ENCODE measurements at regions of chr19 and their contacts with region 1.

Region 1: GRCh38 chr19:53467485-53468262 is at the start of gene ZNF813:
- DNase-seq: peak; percentile 95
- ATAC-seq: peak; percentile 98
- H3K4me3 ChIP-seq: peak within 1 kb of the TSS; percentile 63 to 79 (median 73)
- H3K4me3 Mint-ChIP-seq: peak within 1 kb of the TSS; percentile 97
- H3K27ac ChIP-seq: peak within 1 kb of the TSS; percentile 35 to 80
- H3K27ac Mint-ChIP-seq: peak within 1 kb of the TSS; percentile 91
- H3K4me1 ChIP-seq: peaks cover 6 to 15% of the 10 kb centered on the region in 2 donors
- H3K4me1 Mint-ChIP-seq: peaks cover 32% of the 10 kb centered on the region
- H3K27me3 ChIP-seq: peaks cover 0 to 25% (median 5%) of the 10 kb centered on the region in 4 experiments
- H3K27me3 Mint-ChIP-seq: peaks cover 18% of the 10 kb centered on the region
- CTCF ChIP-seq: no peak
- total RNA-seq, gene ZNF813: 7.8 and 10.8 TPM in 2 replicates

Region 2: DNA sequence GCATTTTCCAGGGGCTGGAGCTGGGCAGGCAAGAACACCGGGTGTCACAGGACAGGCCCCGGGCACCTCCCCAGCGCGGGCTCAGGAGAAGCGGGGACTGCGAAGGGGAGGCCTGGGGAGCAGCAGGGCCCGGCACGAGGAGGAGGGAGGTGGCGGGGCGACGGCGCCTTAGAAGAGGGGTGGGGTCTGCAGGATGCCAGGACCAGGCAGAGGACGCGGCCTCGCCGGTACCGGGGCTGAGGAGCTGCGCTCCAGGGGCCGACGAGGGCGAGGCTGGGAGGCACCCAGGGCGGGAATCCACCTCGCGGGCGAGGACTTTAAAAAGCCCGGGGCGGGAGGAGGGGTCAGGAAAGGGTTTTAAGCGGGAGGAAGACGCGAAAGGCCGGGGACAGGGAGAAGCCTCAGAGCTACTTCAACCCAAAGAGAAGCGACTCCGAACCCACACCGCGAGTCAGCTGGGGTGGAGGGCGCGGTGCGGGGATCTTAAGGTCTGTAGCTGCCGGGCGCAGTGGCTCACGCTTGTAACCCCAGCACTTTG is 309.5 kb before region 1 on chr19:
- CTCF ChIA-PET with region 1: no interaction called
- POLR2A ChIA-PET with region 1: no interaction called
- intact Hi-C with region 1: loop called (anchors 1 kb)
- DNase-seq: peak; percentile 53
- ATAC-seq: peak; percentile 18
- H3K4me3 ChIP-seq: peak overlapping the region; percentile 34 to 72 (median 66)
- H3K4me3 Mint-ChIP-seq: peak overlapping the region; percentile 92
- H3K27ac ChIP-seq: peak overlapping the region; percentile 38 to 50
- H3K27ac Mint-ChIP-seq: peak overlapping the region; percentile 54
- H3K4me1 ChIP-seq: peaks cover 13 to 17% of the 10 kb centered on the region in 2 donors
- H3K4me1 Mint-ChIP-seq: peaks cover 26% of the 10 kb centered on the region
- H3K27me3 ChIP-seq: no peaks in the 10 kb centered on the region
- H3K27me3 Mint-ChIP-seq: no peaks in the 10 kb centered on the region
- CTCF ChIP-seq: no peak

Region 3: GRCh38 chr19:53394974-53395839 is 72.5 kb before region 1 on chr19 and contains the start of gene ZNF765:
- CTCF ChIA-PET with region 1: no interaction called
- POLR2A ChIA-PET with region 1: no interaction called
- intact Hi-C with region 1: loop called (anchors 1 kb)
- DNase-seq: peak; percentile 96
- ATAC-seq: peak; percentile 100
- H3K4me3 ChIP-seq: peak within 1 kb of the TSS; percentile 65 to 85 (median 78)
- H3K4me3 Mint-ChIP-seq: peak within 1 kb of the TSS; percentile 86
- H3K27ac ChIP-seq: peak within 1 kb of the TSS; percentile 34 to 85
- H3K27ac Mint-ChIP-seq: peak within 1 kb of the TSS; percentile 69
- H3K4me1 ChIP-seq: peaks cover 11 to 16% of the 10 kb centered on the region in 2 donors
- H3K4me1 Mint-ChIP-seq: peaks cover 30% of the 10 kb centered on the region
- H3K27me3 ChIP-seq: no peaks in the 10 kb centered on the region
- H3K27me3 Mint-ChIP-seq: no peaks in the 10 kb centered on the region
- CTCF ChIP-seq: peak; percentile 64
- total RNA-seq, gene ZNF765: 24.0 and 26.6 TPM in 2 replicates

Region 4: DNA sequence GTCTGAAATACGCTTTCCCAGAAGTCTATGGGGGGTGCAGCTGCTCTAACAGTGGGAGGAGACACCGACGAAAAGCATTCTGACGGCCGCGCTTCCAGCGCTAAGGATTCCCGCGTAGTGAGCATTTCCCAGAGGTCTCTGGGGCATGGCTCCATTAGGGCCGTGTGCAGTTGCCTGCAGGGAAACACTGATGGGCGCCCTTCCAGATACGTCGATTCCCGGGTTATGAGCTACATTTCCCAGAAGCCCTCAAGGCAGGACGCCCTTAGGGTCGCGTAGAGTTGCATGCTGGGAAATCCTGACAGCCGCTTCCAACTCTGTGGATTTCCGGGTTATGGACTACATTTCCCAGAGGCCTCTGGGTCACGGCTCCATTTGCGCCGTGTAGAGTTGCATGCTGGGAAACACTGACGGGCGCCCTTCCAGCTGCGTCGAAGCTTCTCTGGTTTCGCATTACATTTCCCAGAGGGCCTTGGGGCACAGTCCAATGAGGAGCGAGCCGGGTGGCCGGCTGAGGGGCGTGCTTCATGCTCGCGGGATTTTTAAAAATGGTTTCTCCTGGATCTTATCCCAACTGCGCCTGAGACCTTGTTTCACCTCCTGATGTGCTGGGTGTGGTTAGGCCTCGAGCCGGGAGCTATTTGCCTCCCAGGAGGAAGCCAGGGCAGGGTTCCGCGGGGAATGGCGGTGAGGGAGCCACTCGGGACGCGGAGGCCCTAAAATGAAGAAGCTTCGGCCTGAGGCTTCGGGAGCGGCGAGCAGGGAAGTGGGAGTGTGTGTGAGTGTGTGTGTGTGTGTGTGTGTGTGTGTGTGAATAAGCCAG is 53.1 kb after region 1 on chr19:
- CTCF ChIA-PET with region 1: interaction called, 3 read pairs
- POLR2A ChIA-PET with region 1: no interaction called
- intact Hi-C with region 1: loop called (anchors 1 kb)
- DNase-seq: peak; percentile 96
- ATAC-seq: peak; percentile 97
- H3K4me3 ChIP-seq: peak overlapping the region; percentile 59 to 96 (median 81)
- H3K4me3 Mint-ChIP-seq: peak overlapping the region; percentile 96
- H3K27ac ChIP-seq: peak overlapping the region; percentile 66 to 89
- H3K27ac Mint-ChIP-seq: peak overlapping the region; percentile 95
- H3K4me1 ChIP-seq: peaks cover 7 to 15% of the 10 kb centered on the region in 2 donors
- H3K4me1 Mint-ChIP-seq: peaks cover 16% of the 10 kb centered on the region
- H3K27me3 ChIP-seq: no peaks in the 10 kb centered on the region
- H3K27me3 Mint-ChIP-seq: no peaks in the 10 kb centered on the region
- CTCF ChIP-seq: no peak

Region 5: GRCh38 chr19:53659292-53659691 is 191.6 kb after region 1 on chr19:
- CTCF ChIA-PET with region 1: no interaction called
- POLR2A ChIA-PET with region 1: no interaction called
- intact Hi-C with region 1: no loop called
- DNase-seq: no peak
- ATAC-seq: no peak
- H3K4me3 ChIP-seq: no peak overlapping the region
- H3K4me3 Mint-ChIP-seq: no peak overlapping the region
- H3K27ac ChIP-seq: no peak overlapping the region
- H3K27ac Mint-ChIP-seq: no peak overlapping the region
- H3K4me1 ChIP-seq: no peaks in the 10 kb centered on the region
- H3K4me1 Mint-ChIP-seq: no peaks in the 10 kb centered on the region
- H3K27me3 ChIP-seq: no peaks in the 10 kb centered on the region
- H3K27me3 Mint-ChIP-seq: no peaks in the 10 kb centered on the region
- CTCF ChIP-seq: no peak

Measured in B cell (primary cell).